PC-9 (cell line): ENCODE measurements at regions of chr5 and their contacts with region 1.

Region 1: DNA sequence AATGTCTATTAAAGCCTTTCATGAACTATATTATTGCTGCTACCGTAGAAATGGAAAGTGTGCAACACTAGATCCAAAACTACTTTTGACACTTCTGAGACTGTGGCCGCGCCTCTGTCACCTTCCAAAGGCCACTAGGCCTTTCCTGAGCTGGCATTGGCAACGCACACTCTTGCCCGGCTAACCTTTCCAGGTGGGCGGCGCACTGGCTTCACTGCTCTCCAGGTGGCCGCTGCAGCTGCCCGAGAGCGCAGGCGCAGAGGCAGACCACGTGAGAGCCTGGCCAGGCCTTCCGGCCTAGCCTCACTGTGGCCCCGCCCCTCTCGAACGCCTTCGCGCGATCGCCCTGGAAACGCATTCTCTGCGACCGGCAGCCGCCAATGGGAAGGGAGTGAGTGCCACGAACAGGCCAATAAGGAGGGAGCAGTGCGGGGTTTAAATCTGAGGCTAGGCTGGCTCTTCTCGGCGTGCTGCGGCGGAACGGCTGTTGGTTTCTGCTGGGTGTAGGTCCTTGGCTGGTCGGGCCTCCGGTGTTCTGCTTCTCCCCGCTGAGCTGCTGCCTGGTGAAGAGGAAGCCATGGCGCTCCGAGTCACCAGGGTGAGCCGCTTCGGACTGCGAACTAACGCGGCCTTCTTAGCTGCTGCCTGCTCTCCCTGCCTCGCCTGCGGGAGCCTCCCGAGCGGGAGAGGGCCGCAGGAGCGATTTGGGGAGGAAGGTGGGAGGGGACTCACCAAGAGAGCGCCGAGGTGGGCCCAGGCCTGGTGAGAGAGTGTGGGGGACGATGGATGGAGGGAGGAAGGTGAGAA is at the start of gene CCNB1:
- DNase-seq: peak; percentile 94 to 98
- H3K4me3 ChIP-seq: peak within 1 kb of the TSS; percentile 92
- H3K27ac ChIP-seq: peak within 1 kb of the TSS; percentile 53
- H3K4me1 ChIP-seq: peaks cover 27% of the 10 kb centered on the region
- H3K27me3 ChIP-seq: no peaks in the 10 kb centered on the region
- CTCF ChIP-seq: no peak
- total RNA-seq, gene CCNB1: 174 and 248 TPM in 2 replicates

Region 2: DNA sequence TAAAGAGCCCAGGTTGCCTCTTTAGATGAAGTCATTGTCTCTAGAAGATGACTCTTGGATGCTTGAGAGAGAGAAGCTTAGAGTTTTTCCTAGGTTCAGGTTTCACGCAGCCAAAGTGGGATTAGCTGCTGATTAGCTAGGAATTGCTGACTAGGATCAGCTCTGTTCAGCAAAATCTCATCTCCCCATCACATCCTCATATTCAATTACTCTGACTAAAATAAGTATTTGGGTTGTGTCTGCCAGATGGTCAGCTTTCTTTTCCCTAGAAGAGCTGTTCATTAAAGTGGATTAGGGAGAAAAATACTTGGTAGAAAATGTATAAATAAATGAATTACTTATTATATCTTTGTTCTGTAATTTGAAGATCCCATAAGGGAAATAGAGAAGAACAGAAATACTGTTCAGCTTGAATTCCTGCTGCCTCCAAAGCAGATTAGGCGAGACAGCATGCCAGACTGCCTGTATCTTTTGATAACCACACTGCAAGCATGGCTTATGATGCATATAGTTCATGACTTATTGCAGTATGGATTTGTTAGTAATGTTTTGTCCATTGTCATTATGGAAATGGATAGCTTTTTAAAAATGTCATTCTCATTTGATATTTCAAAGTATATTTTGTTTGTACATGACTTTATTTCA is 1785.5 kb before region 1 on chr5:
- CTCF ChIA-PET with region 1: no interaction called
- POLR2A ChIA-PET with region 1: no interaction called
- intact Hi-C with region 1: no loop called
- DNase-seq: no peak
- H3K4me3 ChIP-seq: no peak overlapping the region
- H3K27ac ChIP-seq: no peak overlapping the region
- H3K4me1 ChIP-seq: no peaks in the 10 kb centered on the region
- H3K27me3 ChIP-seq: no peaks in the 10 kb centered on the region
- CTCF ChIP-seq: no peak

Region 3: GRCh38 chr5:69234457-69235268 is 67.8 kb after region 1 on chr5 and contains the start of gene CDK7:
- CTCF ChIA-PET with region 1: no interaction called
- POLR2A ChIA-PET with region 1: interaction called, 40 read pairs
- intact Hi-C with region 1: no loop called
- DNase-seq: peak; percentile 88 to 92
- H3K4me3 ChIP-seq: peak within 1 kb of the TSS; percentile 72
- H3K27ac ChIP-seq: peak within 1 kb of the TSS; percentile 38
- H3K4me1 ChIP-seq: peaks cover 43% of the 10 kb centered on the region
- H3K27me3 ChIP-seq: no peaks in the 10 kb centered on the region
- CTCF ChIP-seq: no peak
- total RNA-seq, gene CDK7: 51.6 and 60.5 TPM in 2 replicates